ENCODE measurements at regions of chr7 and their contacts with region 1.

Region 1: GRCh38 chr7:47945261-47946001 is 2.8 kb downstream of the PKD1L1 start:
- DNase-seq: peak; percentile 57 to 94 (median 83)

Region 2: GRCh38 chr7:47647181-47647917 is 298.1 kb before region 1 on chr7:
- intact Hi-C with region 1: no loop called
- DNase-seq: peak in 10 of 42 donors; percentile 7 to 52 (median 31)

Region 3: DNA sequence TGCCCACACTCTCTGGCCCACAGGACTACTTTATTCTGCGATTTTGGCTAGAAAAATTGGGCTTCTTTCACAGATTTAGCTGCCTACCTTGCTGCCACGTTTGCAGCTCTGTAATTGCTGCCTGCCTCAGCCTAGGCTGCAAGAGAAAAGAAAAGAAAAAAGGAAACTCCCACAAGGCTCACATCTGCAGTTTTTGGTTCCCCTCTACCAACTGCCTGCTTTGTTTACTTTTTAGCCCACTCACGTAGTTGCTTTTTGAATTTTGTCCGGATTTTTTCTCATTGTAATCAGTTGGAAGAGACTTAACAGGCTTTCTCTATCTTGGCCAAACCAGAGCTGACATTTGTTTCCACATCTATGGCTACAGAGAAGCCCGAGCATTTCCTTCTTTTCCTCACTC is 59.2 kb after region 1 on chr7:
- intact Hi-C with region 1: no loop called
- DNase-seq: no peak

Region 4: DNA sequence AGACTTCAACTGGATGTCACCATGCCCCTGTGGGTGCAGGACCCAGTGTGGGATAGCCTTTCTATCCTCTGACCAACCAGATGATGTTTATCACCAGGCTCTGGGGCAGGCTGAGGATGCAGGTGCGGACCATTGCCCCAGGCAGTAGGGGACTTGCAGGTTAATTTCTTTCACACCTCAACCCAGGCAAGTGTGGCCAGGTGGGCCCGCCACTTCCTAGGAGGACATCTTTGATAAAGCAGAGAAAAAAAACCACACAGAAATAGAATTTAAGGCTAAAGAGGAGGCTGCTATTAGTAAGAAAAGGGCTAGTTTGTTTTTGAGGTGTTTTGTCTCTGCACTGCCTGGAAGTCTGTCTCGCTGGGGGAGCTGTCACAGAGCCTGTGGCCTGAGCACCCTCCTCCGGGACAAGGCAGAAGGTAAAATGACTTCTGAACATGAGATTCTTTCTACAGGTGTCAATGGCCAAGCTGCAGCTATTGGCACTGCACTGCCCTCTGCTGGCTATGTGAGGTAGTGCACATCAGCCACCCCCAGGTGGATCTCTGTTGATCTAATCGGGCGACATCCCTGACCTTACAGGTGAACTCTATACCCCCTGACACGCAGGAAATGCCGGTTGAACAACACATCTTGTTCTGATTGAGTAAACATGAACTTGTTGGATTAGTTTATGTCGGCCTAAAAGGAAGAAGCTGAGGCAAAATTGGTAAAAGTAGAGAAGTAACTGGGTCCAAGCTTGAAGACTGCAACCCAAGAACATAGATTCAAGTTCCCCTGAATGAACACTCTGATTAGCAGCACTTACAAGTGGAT is 164.6 kb after region 1 on chr7:
- intact Hi-C with region 1: loop called (anchors 5 kb)
- DNase-seq: peak; percentile 31 to 93 (median 86)

Measured in head of caudate nucleus (tissue), 42 donors.